Aorta (tissue), 5 donors: ENCODE measurements at regions of chr3 and their contacts with region 1.

Region 1: GRCh38 chr3:48989796-48990635 is at the start of gene P4HTM:
- DNase-seq: peak; percentile 92 to 97
- ATAC-seq: peak; percentile 93
- H3K4me3 ChIP-seq: peak within 1 kb of the TSS; percentile 55 to 71
- H3K27ac ChIP-seq: peak within 1 kb of the TSS; percentile 53 to 97
- H3K4me1 ChIP-seq: peaks cover 0 to 3% of the 10 kb centered on the region in 2 donors
- H3K27me3 ChIP-seq: no peaks in the 10 kb centered on the region
- total RNA-seq, gene P4HTM: 22.0 to 36.6 TPM

Region 2: GRCh38 chr3:49021813-49022687 is 32.0 kb after region 1 on chr3 and contains the start of gene NDUFAF3:
- intact Hi-C with region 1: loop called (anchors 5 kb)
- DNase-seq: peak; percentile 96 to 98
- ATAC-seq: peak; percentile 94
- H3K4me3 ChIP-seq: peak within 1 kb of the TSS; percentile 85 to 88
- H3K27ac ChIP-seq: peak within 1 kb of the TSS; percentile 94 to 97
- H3K4me1 ChIP-seq: no peaks in the 10 kb centered on the region
- H3K27me3 ChIP-seq: peaks cover 0 to 1% of the 10 kb centered on the region in 2 donors
- total RNA-seq, gene NDUFAF3: 55.8 to 60.6 TPM

Region 3: GRCh38 chr3:49028673-49029562 is 38.9 kb after region 1 on chr3 and contains the start of gene IMPDH2:
- intact Hi-C with region 1: loop called (anchors 5 kb)
- DNase-seq: peak; percentile 96 to 98
- ATAC-seq: peak; percentile 97
- H3K4me3 ChIP-seq: peak within 1 kb of the TSS; percentile 19 to 37
- H3K27ac ChIP-seq: peak within 1 kb of the TSS in 1 of 2 donors; percentile 72
- H3K4me1 ChIP-seq: no peaks in the 10 kb centered on the region
- H3K27me3 ChIP-seq: peaks cover 0 to 1% of the 10 kb centered on the region in 2 donors
- total RNA-seq, gene IMPDH2: 84.6 to 101 TPM

Region 4: DNA sequence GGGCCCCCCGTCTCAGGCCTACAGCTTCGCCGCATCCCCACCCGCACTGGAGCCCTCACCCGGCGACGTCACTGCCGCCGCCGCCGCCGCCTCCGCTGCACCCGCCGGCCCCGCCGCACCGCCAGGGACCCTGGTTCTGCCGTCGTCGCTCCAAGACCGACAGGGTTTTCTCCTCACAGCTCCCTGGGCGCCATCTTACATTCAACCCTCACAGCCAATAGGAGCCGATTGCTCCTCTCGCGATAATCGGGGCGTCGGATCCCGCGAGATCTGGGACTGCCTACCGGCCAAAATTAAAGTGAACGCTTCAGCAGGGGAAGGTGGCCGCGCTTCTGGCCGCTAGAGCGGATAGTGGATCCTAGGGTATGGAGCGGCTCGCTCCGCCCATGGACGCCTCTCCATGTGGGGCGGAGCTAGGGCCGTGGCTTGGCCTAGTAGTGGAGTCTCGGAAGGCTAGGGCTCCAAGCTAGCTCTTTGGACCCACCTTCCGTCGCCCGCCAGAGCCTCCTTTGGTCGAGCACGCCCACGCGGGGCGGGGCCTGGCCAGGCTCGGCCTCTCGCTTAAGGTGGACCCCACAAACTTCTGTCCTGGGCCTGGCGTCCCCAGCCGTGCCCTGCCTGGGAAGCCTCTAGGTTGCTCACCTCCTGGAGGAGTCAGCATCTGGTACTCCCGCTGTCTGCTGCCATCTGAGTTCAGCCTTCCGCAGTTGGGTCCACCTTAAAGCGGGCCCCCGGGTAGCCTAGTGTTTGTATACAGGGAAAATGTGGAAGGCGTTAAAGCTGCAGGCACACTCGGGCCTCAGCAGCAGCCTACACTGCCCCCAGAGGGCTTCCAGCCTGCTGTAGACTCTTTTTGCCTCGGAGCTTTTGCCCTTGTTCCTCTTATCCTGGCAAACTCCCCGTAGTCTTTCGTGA is 104.1 kb after region 1 on chr3 and contains the start of gene QRICH1:
- intact Hi-C with region 1: loop called in 1 of 2 experiments (anchors 2 kb)
- DNase-seq: peak; percentile 99
- ATAC-seq: peak; percentile 97
- H3K4me3 ChIP-seq: peak within 1 kb of the TSS; percentile 71 to 88
- H3K27ac ChIP-seq: peak within 1 kb of the TSS; percentile 62 to 77
- H3K4me1 ChIP-seq: no peaks in the 10 kb centered on the region
- H3K27me3 ChIP-seq: no peaks in the 10 kb centered on the region
- total RNA-seq, gene QRICH1: 77.3 to 103 TPM